ENCODE measurements at regions of chr12 and their contacts with region 1.

Region 1: GRCh38 chr12:67498991-67499390 is 149.6 kb upstream of the DYRK2 start:
- DNase-seq: no peak
- ATAC-seq: no peak
- H3K4me3 ChIP-seq: no peak overlapping the region
- H3K4me3 Mint-ChIP-seq: no peak overlapping the region
- H3K27ac ChIP-seq: no peak overlapping the region
- H3K27ac Mint-ChIP-seq: no peak overlapping the region
- H3K4me1 ChIP-seq: peaks cover 4% of the 10 kb centered on the region
- H3K4me1 Mint-ChIP-seq: peaks cover 25% of the 10 kb centered on the region
- H3K27me3 ChIP-seq: no peaks in the 10 kb centered on the region
- H3K27me3 Mint-ChIP-seq: no peaks in the 10 kb centered on the region
- CTCF ChIP-seq: no peak

Region 2: DNA sequence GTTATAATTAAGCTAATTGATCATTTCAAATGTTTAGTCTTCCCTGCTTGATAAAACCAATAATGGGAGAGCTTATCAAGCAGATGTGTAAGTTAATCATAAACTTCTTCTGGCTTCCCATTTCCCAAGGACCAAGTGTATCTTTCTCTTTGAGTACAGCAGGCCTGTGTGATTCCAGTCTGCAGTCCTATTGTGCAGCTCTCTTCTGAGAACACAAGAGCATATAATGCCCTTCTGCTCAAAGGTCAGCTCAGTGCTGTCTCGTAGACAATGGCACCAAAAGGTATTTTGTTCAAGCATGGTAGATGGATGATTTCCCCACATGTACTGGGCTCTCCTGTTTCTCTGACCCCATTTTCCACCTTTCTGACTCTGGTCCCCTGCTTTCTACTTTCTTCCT is 47.8 kb after region 1 on chr12:
- CTCF ChIA-PET with region 1: no interaction called
- POLR2A ChIA-PET with region 1: no interaction called
- intact Hi-C with region 1: loop called in 1 of 2 experiments (anchors 1 kb)
- DNase-seq: no peak
- ATAC-seq: no peak
- H3K4me3 ChIP-seq: no peak overlapping the region
- H3K4me3 Mint-ChIP-seq: no peak overlapping the region
- H3K27ac ChIP-seq: no peak overlapping the region
- H3K27ac Mint-ChIP-seq: no peak overlapping the region
- H3K4me1 ChIP-seq: peaks cover 8% of the 10 kb centered on the region
- H3K4me1 Mint-ChIP-seq: peaks cover 30% of the 10 kb centered on the region
- H3K27me3 ChIP-seq: no peaks in the 10 kb centered on the region
- H3K27me3 Mint-ChIP-seq: no peaks in the 10 kb centered on the region
- CTCF ChIP-seq: no peak

Measured in CD4-positive, alpha-beta T cell (primary cell).